ENCODE measurements at regions of chr10 and their contacts with region 1.

Region 1: DNA sequence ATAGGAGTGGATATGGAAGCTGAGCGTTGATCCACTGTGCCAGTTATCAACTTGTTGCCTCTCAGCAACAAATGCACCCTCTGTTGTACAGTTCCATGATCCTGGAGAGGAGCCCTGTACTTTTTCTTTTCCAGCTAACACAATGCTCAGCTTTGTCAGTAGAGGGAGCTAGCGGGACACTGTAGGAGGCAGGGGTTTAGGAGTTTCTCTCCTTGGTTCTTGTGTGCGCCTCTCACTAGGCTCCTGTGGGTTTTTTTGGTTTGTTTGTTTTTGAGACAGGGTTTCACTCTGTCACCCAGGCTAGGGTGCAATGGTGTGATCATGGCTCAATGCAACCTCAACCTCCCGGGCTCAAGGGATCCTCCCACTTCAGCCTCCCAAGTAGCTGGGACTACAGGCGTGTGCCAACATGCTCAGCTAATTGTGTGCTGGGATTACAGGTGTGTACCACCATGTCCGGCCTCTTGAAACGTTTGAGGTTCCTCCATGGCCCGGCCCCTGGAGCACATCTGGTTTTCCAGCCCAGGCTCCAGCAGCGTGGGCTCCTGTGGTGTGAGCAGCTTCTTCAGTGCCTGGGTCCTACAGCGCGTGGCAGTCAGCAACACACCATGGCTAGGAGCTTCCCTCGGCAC is 12.0 kb upstream of the MARVELD1 start:
- DNase-seq: peak; percentile 58
- H3K4me3 Mint-ChIP-seq: no peak overlapping the region
- H3K27ac Mint-ChIP-seq: no peak overlapping the region
- H3K4me1 Mint-ChIP-seq: no peaks in the 10 kb centered on the region
- H3K27me3 Mint-ChIP-seq: no peaks in the 10 kb centered on the region
- CTCF ChIP-seq: no peak

Region 2: GRCh38 chr10:97584060-97584797 is 117.3 kb before region 1 on chr10 and contains the start of gene HOGA1:
- CTCF ChIA-PET with region 1: no interaction called
- intact Hi-C with region 1: no loop called
- DNase-seq: peak; percentile 88
- H3K4me3 Mint-ChIP-seq: peak within 1 kb of the TSS; percentile 71
- H3K27ac Mint-ChIP-seq: peak within 1 kb of the TSS; percentile 88
- H3K4me1 Mint-ChIP-seq: peaks cover 44% of the 10 kb centered on the region
- H3K27me3 Mint-ChIP-seq: no peaks in the 10 kb centered on the region
- CTCF ChIP-seq: no peak
- total RNA-seq, gene HOGA1: 7.8 and 7.9 TPM in 2 replicates

Region 3: GRCh38 chr10:97686962-97687784 is 14.4 kb before region 1 on chr10 and contains the start of gene AVPI1:
- CTCF ChIA-PET with region 1: interaction called, 19 read pairs
- intact Hi-C with region 1: no loop called
- DNase-seq: peak; percentile 97
- H3K4me3 Mint-ChIP-seq: peak within 1 kb of the TSS; percentile 73
- H3K27ac Mint-ChIP-seq: peak within 1 kb of the TSS; percentile 76
- H3K4me1 Mint-ChIP-seq: peaks cover 21% of the 10 kb centered on the region
- H3K27me3 Mint-ChIP-seq: no peaks in the 10 kb centered on the region
- CTCF ChIP-seq: no peak
- total RNA-seq, gene AVPI1: 16.9 and 25.6 TPM in 2 replicates

Measured in Calu3 (cell line).